WTC11 (cell line): ENCODE measurements at regions of chr10 and their contacts with region 1.

Region 1: GRCh38 chr10:117216611-117217195 is 19.4 kb downstream of the KCNK18 start:
- DNase-seq: peak; percentile 83
- ATAC-seq: peak; percentile 52
- H3K4me3 Mint-ChIP-seq: peak overlapping the region; percentile 76
- H3K27ac Mint-ChIP-seq: no peak overlapping the region
- H3K4me1 Mint-ChIP-seq: peaks cover 17% of the 10 kb centered on the region
- H3K27me3 Mint-ChIP-seq: peaks cover 72% of the 10 kb centered on the region
- CTCF ChIP-seq: peak; percentile 99

Region 2: DNA sequence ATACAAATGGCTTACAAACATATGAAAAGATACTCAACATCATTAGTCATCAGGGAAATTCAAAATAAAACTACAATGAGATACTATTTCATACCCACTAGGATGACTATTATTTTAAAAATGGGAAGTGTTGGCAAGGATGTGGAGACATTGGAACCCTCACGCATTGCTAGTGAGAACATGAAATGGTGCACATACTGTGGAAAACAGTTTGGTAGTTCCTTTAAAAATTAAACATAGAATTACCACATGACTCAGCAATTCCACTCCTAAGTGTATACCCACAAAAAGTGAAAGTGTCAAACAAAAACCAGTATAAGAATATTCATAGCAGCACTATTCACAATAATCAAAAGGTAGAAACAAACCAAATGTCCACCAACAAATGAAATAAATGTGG is 163.2 kb before region 1 on chr10:
- CTCF ChIA-PET with region 1: no interaction called
- POLR2A ChIA-PET with region 1: no interaction called
- DNase-seq: no peak
- ATAC-seq: no peak
- H3K4me3 Mint-ChIP-seq: no peak overlapping the region
- H3K27ac Mint-ChIP-seq: no peak overlapping the region
- H3K4me1 Mint-ChIP-seq: no peaks in the 10 kb centered on the region
- H3K27me3 Mint-ChIP-seq: no peaks in the 10 kb centered on the region; the same call in 1 of the 2 replicates
- CTCF ChIP-seq: no peak

Region 3: DNA sequence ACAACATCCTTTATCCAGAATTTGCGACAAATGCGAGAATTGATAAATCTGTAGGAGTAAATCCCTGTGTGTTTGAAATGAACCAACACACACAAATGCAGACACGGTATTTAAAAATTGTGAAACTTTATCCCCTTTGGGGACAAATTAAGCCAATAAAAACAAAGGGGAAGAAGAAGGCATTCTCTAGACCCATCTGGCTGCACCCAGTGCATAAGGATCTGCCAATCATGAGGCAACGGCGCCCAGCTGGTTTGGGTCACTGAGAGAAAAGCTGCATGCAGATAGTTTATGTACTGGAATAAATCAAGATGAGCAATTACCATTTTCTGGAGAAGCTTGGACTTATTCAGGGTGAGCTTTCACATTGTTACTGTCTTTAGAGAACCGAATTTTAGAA is 124.3 kb before region 1 on chr10:
- CTCF ChIA-PET with region 1: no interaction called
- POLR2A ChIA-PET with region 1: no interaction called
- DNase-seq: no peak
- ATAC-seq: no peak
- H3K4me3 Mint-ChIP-seq: no peak overlapping the region
- H3K27ac Mint-ChIP-seq: no peak overlapping the region
- H3K4me1 Mint-ChIP-seq: peaks cover 37% of the 10 kb centered on the region
- H3K27me3 Mint-ChIP-seq: no peaks in the 10 kb centered on the region
- CTCF ChIP-seq: no peak

Region 4: DNA sequence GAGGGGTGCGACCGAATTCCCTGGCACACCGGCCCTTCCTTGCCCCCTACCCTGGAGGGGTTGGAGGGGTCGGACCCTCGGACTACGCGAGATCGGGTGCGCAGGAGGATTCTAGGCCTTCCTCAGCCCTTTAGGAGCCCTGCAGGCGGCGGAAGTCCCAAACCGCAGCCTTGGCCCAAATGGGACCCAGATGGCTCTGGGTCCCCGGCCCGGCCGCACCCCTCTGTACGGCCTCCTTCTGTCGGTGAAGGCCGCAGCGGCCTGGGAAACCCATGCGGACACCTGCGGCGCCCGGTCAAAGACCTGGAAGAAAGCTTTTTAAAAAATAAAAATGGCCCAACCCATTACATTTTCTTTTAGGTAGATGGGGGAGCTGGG is 76.2 kb before region 1 on chr10:
- CTCF ChIA-PET with region 1: no interaction called
- POLR2A ChIA-PET with region 1: no interaction called
- DNase-seq: peak; percentile 41
- ATAC-seq: peak; percentile 5; the same call in 1 of the 2 replicates
- H3K4me3 Mint-ChIP-seq: peak overlapping the region; percentile 53
- H3K27ac Mint-ChIP-seq: no peak overlapping the region
- H3K4me1 Mint-ChIP-seq: peaks cover 29% of the 10 kb centered on the region
- H3K27me3 Mint-ChIP-seq: peaks cover 97% of the 10 kb centered on the region
- CTCF ChIP-seq: no peak

Region 5: DNA sequence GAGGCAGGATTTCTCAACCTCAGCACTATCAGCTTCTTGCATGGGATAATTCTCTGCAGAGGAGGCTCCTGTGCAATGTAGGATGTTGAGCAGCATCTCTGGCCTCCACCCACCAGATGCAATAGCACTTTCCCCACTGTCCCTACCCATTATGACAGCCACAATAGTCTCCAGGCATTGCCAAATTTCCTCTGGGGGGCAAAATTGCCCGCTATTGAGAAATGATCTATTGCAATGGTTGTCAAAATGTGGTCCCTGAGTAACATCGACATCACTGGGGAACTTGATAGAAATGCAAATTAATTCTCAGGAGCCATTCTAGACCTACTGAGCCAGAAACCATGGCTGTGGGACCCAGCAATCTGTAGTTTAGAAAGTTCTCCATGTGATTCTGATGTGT is 12.4 kb before region 1 on chr10:
- CTCF ChIA-PET with region 1: interaction called, 19 read pairs
- POLR2A ChIA-PET with region 1: no interaction called
- DNase-seq: no peak
- ATAC-seq: no peak
- H3K4me3 Mint-ChIP-seq: no peak overlapping the region
- H3K27ac Mint-ChIP-seq: no peak overlapping the region
- H3K4me1 Mint-ChIP-seq: 0 out of 2 replicates have a peak, but pooled peaks cover 5% of the 10 kb centered on the region
- H3K27me3 Mint-ChIP-seq: no peaks in the 10 kb centered on the region; the same call in 1 of the 2 replicates
- CTCF ChIP-seq: no peak

Region 6: GRCh38 chr10:117260084-117260483 is 43.4 kb after region 1 on chr10:
- CTCF ChIA-PET with region 1: interaction called, 13 read pairs
- POLR2A ChIA-PET with region 1: no interaction called
- DNase-seq: no peak
- ATAC-seq: peak; percentile 76
- H3K4me3 Mint-ChIP-seq: no peak overlapping the region
- H3K27ac Mint-ChIP-seq: peak overlapping the region; percentile 28; the same call in 1 of the 2 replicates
- H3K4me1 Mint-ChIP-seq: peaks cover 24% of the 10 kb centered on the region
- H3K27me3 Mint-ChIP-seq: no peaks in the 10 kb centered on the region
- CTCF ChIP-seq: no peak

Region 7: GRCh38 chr10:117425974-117426566 is 209.4 kb after region 1 on chr10:
- CTCF ChIA-PET with region 1: interaction called, 17 read pairs
- POLR2A ChIA-PET with region 1: no interaction called
- DNase-seq: no peak
- ATAC-seq: peak; percentile 11; the same call in 1 of the 2 replicates
- H3K4me3 Mint-ChIP-seq: no peak overlapping the region
- H3K27ac Mint-ChIP-seq: peak overlapping the region; percentile 71
- H3K4me1 Mint-ChIP-seq: peaks cover 39% of the 10 kb centered on the region
- H3K27me3 Mint-ChIP-seq: peaks cover 14% of the 10 kb centered on the region
- CTCF ChIP-seq: no peak

Region 8: GRCh38 chr10:117461766-117462423 is 245.2 kb after region 1 on chr10:
- CTCF ChIA-PET with region 1: interaction called, 20 read pairs
- POLR2A ChIA-PET with region 1: no interaction called
- DNase-seq: no peak
- ATAC-seq: no peak; the same call in none of the 2 replicates
- H3K4me3 Mint-ChIP-seq: no peak overlapping the region
- H3K27ac Mint-ChIP-seq: no peak overlapping the region
- H3K4me1 Mint-ChIP-seq: peaks cover 34% of the 10 kb centered on the region
- H3K27me3 Mint-ChIP-seq: no peaks in the 10 kb centered on the region
- CTCF ChIP-seq: no peak

Region 9: DNA sequence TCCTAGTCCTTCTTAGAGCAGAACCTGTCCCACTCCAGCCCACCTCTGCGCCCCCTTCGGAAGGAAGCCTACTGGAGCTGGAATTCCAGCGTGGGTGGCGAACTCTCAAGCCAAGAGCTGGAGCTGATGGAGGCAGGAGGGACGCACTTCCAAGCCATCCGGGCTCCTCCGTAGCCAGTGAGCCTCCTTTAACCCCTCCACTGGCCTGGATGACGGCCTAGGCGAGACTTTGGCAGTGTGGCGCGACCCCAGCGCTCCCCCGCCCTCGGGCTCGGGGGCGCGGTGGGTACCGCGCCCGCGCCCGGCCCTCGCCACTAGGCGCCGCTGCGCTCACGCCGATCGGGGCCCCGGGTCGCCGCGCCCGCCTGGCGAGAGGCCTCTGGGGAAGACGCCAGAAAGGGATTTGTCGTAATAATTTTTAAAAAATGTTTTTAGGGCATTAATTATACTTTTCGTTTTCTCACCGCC is 320.8 kb after region 1 on chr10:
- CTCF ChIA-PET with region 1: interaction called, 17 read pairs
- POLR2A ChIA-PET with region 1: no interaction called
- DNase-seq: peak; percentile 43
- ATAC-seq: peak; percentile 10
- H3K4me3 Mint-ChIP-seq: peak overlapping the region; percentile 50
- H3K27ac Mint-ChIP-seq: no peak overlapping the region
- H3K4me1 Mint-ChIP-seq: peaks cover 26% of the 10 kb centered on the region
- H3K27me3 Mint-ChIP-seq: peaks cover 100% of the 10 kb centered on the region
- CTCF ChIP-seq: peak; percentile 60